ENCODE measurements at regions of chr7 and their contacts with region 1.

Region 1: GRCh38 chr7:15015545-15016326 is 113.2 kb upstream of the DGKB start:
- DNase-seq: no peak
- H3K4me3 Mint-ChIP-seq: no peak overlapping the region
- H3K27ac Mint-ChIP-seq: no peak overlapping the region
- H3K4me1 Mint-ChIP-seq: no peaks in the 10 kb centered on the region
- H3K27me3 Mint-ChIP-seq: no peaks in the 10 kb centered on the region

Region 2: GRCh38 chr7:14691597-14692203 is 324.0 kb before region 1 on chr7:
- CTCF ChIA-PET with region 1: interaction called, 10 read pairs
- POLR2A ChIA-PET with region 1: no interaction called
- intact Hi-C with region 1: loop called (anchors 5 kb)
- DNase-seq: peak; percentile 53
- H3K4me3 Mint-ChIP-seq: no peak overlapping the region
- H3K27ac Mint-ChIP-seq: no peak overlapping the region
- H3K4me1 Mint-ChIP-seq: no peaks in the 10 kb centered on the region
- H3K27me3 Mint-ChIP-seq: peaks cover 8% of the 10 kb centered on the region

Region 3: DNA sequence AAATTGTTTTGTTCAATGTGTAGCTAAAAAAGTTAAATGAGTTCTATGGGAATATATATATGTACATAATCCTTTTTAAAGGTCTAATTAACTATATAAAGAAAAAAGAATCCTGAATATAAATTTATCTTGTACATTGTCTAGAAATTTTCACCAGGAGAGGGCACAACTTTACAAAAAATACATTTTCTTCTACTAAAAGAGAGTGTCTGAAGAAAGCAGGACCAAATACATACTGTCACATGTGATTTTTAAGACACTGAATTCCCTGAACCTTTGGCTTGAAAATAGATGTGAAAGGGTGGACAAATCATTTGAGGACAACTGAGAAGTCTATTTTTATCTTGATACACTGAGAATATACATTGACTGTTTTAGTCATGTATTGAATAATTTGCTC is 317.5 kb before region 1 on chr7:
- CTCF ChIA-PET with region 1: interaction called, 5 read pairs
- POLR2A ChIA-PET with region 1: no interaction called
- intact Hi-C with region 1: loop called (anchors 5 kb)
- DNase-seq: no peak
- H3K4me3 Mint-ChIP-seq: no peak overlapping the region
- H3K27ac Mint-ChIP-seq: no peak overlapping the region
- H3K4me1 Mint-ChIP-seq: no peaks in the 10 kb centered on the region
- H3K27me3 Mint-ChIP-seq: no peaks in the 10 kb centered on the region

Region 4: GRCh38 chr7:14717816-14718215 is 297.9 kb before region 1 on chr7:
- CTCF ChIA-PET with region 1: interaction called, 7 read pairs
- POLR2A ChIA-PET with region 1: no interaction called
- intact Hi-C with region 1: loop called (anchors 1 kb)
- DNase-seq: no peak
- H3K4me3 Mint-ChIP-seq: no peak overlapping the region
- H3K27ac Mint-ChIP-seq: no peak overlapping the region
- H3K4me1 Mint-ChIP-seq: peaks cover 9% of the 10 kb centered on the region
- H3K27me3 Mint-ChIP-seq: no peaks in the 10 kb centered on the region

Region 5: GRCh38 chr7:15005672-15006071 is 10.1 kb before region 1 on chr7:
- CTCF ChIA-PET with region 1: interaction called, 10 read pairs
- POLR2A ChIA-PET with region 1: no interaction called
- intact Hi-C with region 1: no loop called
- DNase-seq: no peak
- H3K4me3 Mint-ChIP-seq: no peak overlapping the region
- H3K27ac Mint-ChIP-seq: no peak overlapping the region
- H3K4me1 Mint-ChIP-seq: no peaks in the 10 kb centered on the region
- H3K27me3 Mint-ChIP-seq: no peaks in the 10 kb centered on the region

Region 6: DNA sequence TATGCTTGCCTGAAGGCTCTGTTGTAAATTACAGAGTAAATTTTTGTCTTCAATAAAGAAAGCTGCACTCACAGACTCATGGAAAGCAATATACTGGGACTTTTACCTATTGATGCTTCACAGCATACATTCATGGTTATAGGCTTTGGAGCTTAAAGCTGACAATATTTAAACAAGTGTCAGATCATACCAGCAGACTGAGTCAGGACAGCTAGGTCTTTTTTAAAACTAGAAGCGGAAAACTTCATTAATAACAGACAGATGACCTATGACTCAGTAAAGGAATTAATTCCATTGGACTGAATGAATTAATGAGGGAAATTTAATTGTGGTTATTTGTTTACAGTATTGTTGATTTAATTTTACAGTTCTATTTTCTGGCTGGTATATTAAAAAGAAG is 52.6 kb after region 1 on chr7:
- CTCF ChIA-PET with region 1: no interaction called
- POLR2A ChIA-PET with region 1: no interaction called
- intact Hi-C with region 1: no loop called
- DNase-seq: no peak
- H3K4me3 Mint-ChIP-seq: no peak overlapping the region
- H3K27ac Mint-ChIP-seq: no peak overlapping the region
- H3K4me1 Mint-ChIP-seq: no peaks in the 10 kb centered on the region
- H3K27me3 Mint-ChIP-seq: no peaks in the 10 kb centered on the region

Region 7: GRCh38 chr7:15168489-15168888 is 152.8 kb after region 1 on chr7:
- CTCF ChIA-PET with region 1: no interaction called
- POLR2A ChIA-PET with region 1: no interaction called
- intact Hi-C with region 1: no loop called
- DNase-seq: no peak
- H3K4me3 Mint-ChIP-seq: no peak overlapping the region
- H3K27ac Mint-ChIP-seq: no peak overlapping the region
- H3K4me1 Mint-ChIP-seq: no peaks in the 10 kb centered on the region
- H3K27me3 Mint-ChIP-seq: no peaks in the 10 kb centered on the region

Measured in activated CD4-positive, alpha-beta memory T cell treated with anti-CD3 and anti-CD28 coated beads for 36 hours (primary cell).